ENCODE measurements at regions of chr19 and their contacts with region 1.

Region 1: GRCh38 chr19:3572132-3572854 is 451 bp upstream of the HMG20B start:
- DNase-seq: peak; percentile 99
- H3K4me3 ChIP-seq: peak overlapping the region; percentile 35 to 84 (median 64)
- H3K4me3 Mint-ChIP-seq: peak overlapping the region; percentile 76 to 80
- H3K27ac ChIP-seq: peak overlapping the region in 1 of 2 donors; percentile 82
- H3K27ac Mint-ChIP-seq: peak overlapping the region; percentile 38 to 87 (median 79)
- H3K4me1 ChIP-seq: peaks cover 30 to 44% of the 10 kb centered on the region in 2 donors
- H3K4me1 Mint-ChIP-seq: peaks cover 35% of the 10 kb centered on the region
- H3K27me3 ChIP-seq: no peaks in the 10 kb centered on the region
- H3K27me3 Mint-ChIP-seq: peaks cover 0 to 2% (median 2%) of the 10 kb centered on the region in 3 donors
- CTCF ChIP-seq: no peak

Region 2: GRCh38 chr19:3505598-3506383 is 66.5 kb before region 1 on chr19 and contains the start of gene FZR1:
- intact Hi-C with region 1: loop called in 1 of 2 experiments (anchors 5 kb)
- DNase-seq: peak; percentile 99
- H3K4me3 ChIP-seq: peak within 1 kb of the TSS; percentile 86 to 91 (median 87)
- H3K4me3 Mint-ChIP-seq: peak within 1 kb of the TSS; percentile 94 to 95
- H3K27ac ChIP-seq: peak within 1 kb of the TSS; percentile 58 to 92
- H3K27ac Mint-ChIP-seq: peak within 1 kb of the TSS; percentile 94 to 97 (median 96)
- H3K4me1 ChIP-seq: peaks cover 23 to 28% of the 10 kb centered on the region in 2 donors
- H3K4me1 Mint-ChIP-seq: peaks cover 43% of the 10 kb centered on the region
- H3K27me3 ChIP-seq: no peaks in the 10 kb centered on the region
- H3K27me3 Mint-ChIP-seq: peaks cover 0 to 3% (median 2%) of the 10 kb centered on the region in 3 donors
- CTCF ChIP-seq: no peak
- polyA plus RNA-seq, gene FZR1: 7.7 to 44.6 (median 9.4) TPM

Region 3: GRCh38 chr19:3557461-3558248 is 14.6 kb before region 1 on chr19 and contains the start of gene MFSD12:
- intact Hi-C with region 1: loop called (anchors 2 kb)
- DNase-seq: peak; percentile 92 to 95 (median 92)
- H3K4me3 ChIP-seq: peak within 1 kb of the TSS; percentile 89 to 98 (median 90)
- H3K4me3 Mint-ChIP-seq: peak within 1 kb of the TSS; percentile 100
- H3K27ac ChIP-seq: peak within 1 kb of the TSS; percentile 96
- H3K27ac Mint-ChIP-seq: peak within 1 kb of the TSS; percentile 93 to 98 (median 96)
- H3K4me1 ChIP-seq: peaks cover 53 to 60% of the 10 kb centered on the region in 2 donors
- H3K4me1 Mint-ChIP-seq: peaks cover 52% of the 10 kb centered on the region
- H3K27me3 ChIP-seq: no peaks in the 10 kb centered on the region
- H3K27me3 Mint-ChIP-seq: peaks cover 0 to 4% (median 0%) of the 10 kb centered on the region in 3 donors
- CTCF ChIP-seq: no peak
- polyA plus RNA-seq, gene MFSD12: 47.9 to 150 (median 55.5) TPM

Region 4: DNA sequence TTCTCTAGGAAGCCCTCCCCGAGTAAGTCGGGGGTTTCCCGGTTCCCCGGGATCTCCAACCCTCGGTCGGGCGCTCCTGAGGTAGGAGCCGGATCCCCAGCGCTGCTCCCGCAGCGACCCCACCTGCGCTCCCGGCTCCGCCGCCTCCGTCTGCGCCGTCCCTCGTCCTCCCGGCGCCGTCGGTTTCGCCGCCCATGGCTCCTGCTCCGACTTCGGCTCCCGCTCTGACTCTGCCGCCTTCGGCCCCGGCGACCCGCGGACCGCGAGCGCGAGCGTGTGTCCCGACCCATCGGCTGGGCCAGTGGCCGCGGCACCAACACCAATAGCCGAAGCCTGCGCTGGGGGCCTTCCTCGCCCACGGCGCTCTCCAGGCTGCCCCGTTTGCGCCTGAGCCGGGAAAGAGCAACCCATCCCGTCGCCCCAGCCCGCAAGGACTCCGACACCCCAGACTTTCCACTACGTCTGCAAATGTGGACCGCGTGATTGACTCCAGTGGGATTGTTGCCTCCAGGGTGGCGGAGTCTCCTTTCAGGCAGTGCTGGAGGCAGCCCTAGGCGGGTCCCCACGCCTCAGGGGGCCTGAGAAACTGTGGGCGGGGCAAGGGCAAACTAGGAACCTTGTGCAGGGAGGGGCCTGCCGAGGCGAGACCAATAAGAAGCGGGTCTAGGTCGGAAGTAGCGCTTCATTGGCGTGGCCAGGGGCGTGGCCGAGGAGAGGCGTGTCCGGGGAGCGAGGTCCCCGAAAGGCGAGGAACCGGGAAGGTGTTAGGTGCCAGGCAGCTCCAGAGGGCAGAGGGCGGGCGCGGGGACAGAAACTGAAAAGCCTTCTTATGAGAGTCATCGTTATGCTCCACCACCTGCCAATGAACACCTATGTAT is 54.4 kb after region 1 on chr19 and contains the start of gene CACTIN:
- intact Hi-C with region 1: loop called in 1 of 2 experiments (anchors 2 kb)
- DNase-seq: peak; percentile 98
- H3K4me3 ChIP-seq: peak within 1 kb of the TSS; percentile 64 to 98 (median 92)
- H3K4me3 Mint-ChIP-seq: peak within 1 kb of the TSS; percentile 95 to 98
- H3K27ac ChIP-seq: peak within 1 kb of the TSS; percentile 87 to 91
- H3K27ac Mint-ChIP-seq: peak within 1 kb of the TSS; percentile 96 to 99 (median 99)
- H3K4me1 ChIP-seq: peaks cover 17 to 25% of the 10 kb centered on the region in 2 donors
- H3K4me1 Mint-ChIP-seq: peaks cover 21% of the 10 kb centered on the region
- H3K27me3 ChIP-seq: no peaks in the 10 kb centered on the region
- H3K27me3 Mint-ChIP-seq: no peaks in the 10 kb centered on the region
- CTCF ChIP-seq: no peak
- polyA plus RNA-seq, gene CACTIN: 2.5 to 19.4 (median 3.0) TPM